Testis (tissue), 5 donors: ENCODE measurements at regions of chr15 and their contacts with region 1.

Region 1: GRCh38 chr15:31365655-31366127 is 39.1 kb downstream of the KLF13 start:
- DNase-seq: peak; percentile 97
- H3K4me3 ChIP-seq: peak overlapping the region in 1 of 2 donors; percentile 27
- H3K27ac ChIP-seq: peak overlapping the region; percentile 90 to 94
- H3K4me1 ChIP-seq: peaks cover 78% of the 10 kb centered on the region
- H3K27me3 ChIP-seq: no peaks in the 10 kb centered on the region
- CTCF ChIP-seq: peak in 1 of 3 experiments; percentile 12
- POLR2A ChIP-seq: no peak

Region 2: GRCh38 chr15:31326156-31326732 is 39.4 kb before region 1 on chr15:
- intact Hi-C with region 1: loop called (anchors 2 kb)
- DNase-seq: peak; percentile 98
- H3K4me3 ChIP-seq: peak overlapping the region; percentile 88 to 93
- H3K27ac ChIP-seq: peak overlapping the region; percentile 98 to 99
- H3K4me1 ChIP-seq: peaks cover 37% of the 10 kb centered on the region
- H3K27me3 ChIP-seq: no peaks in the 10 kb centered on the region
- CTCF ChIP-seq: peak in 2 of 3 experiments; percentile 1 to 24
- POLR2A ChIP-seq: peak; percentile 85